Activated CD8-positive, alpha-beta T cell treated with anti-CD3 and anti-CD28 coated beads, Interleukin-2, amount 10 ng/mL, durations not matched to agents 7 days and 5 days (primary cell): ENCODE measurements at regions of chr12 and their contacts with region 1.

Region 1: GRCh38 chr12:21438643-21439042 is 1.2 kb downstream of the PYROXD1 start:
- DNase-seq: no peak
- ATAC-seq: no peak
- H3K4me3 Mint-ChIP-seq: peak overlapping the region; percentile 92
- H3K27ac Mint-ChIP-seq: peak overlapping the region; percentile 94
- H3K4me1 Mint-ChIP-seq: peaks cover 33% of the 10 kb centered on the region
- H3K27me3 Mint-ChIP-seq: peaks cover 15% of the 10 kb centered on the region

Region 2: DNA sequence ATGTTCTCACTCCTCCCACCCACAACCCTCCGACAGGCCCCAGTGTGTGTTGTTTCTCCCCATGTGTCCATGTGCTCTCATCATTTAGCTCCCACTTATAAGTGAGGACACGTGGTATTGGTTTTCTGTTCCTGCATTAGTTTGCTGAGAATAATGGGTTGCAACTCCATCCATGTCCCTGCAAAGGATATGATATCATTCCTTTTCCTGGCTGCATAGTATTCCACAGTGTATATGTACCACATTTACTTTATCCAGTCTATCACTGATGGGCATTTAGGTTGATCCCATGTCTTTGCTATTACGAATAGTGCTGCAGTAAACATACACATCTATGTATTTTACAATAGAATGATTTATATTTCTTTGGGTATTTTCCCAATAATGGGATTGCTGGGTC is 181.5 kb before region 1 on chr12:
- CTCF ChIA-PET with region 1: no interaction called
- POLR2A ChIA-PET with region 1: no interaction called
- DNase-seq: no peak
- ATAC-seq: no peak
- H3K4me3 Mint-ChIP-seq: no peak overlapping the region
- H3K27ac Mint-ChIP-seq: no peak overlapping the region
- H3K4me1 Mint-ChIP-seq: no peaks in the 10 kb centered on the region
- H3K27me3 Mint-ChIP-seq: no peaks in the 10 kb centered on the region

Region 3: DNA sequence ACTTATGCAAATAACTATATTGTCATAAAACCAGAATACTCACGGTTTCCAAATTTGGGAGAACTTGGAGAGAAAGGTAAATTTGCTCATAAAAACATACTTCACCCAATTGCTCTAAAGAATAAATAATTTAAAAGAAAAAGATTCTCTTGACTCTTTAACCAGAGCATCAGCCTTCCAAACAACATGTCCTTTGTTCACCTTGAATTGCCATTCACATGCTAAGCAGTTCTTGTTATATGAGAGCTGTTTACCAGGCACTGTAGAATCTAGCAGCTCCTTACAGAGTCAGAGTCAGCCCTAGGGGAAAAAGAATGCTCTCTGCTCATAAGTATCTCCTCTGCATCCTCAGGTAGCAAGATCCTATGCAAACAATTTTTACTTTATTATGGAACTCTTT is 114.1 kb before region 1 on chr12:
- CTCF ChIA-PET with region 1: no interaction called
- POLR2A ChIA-PET with region 1: no interaction called
- DNase-seq: no peak
- ATAC-seq: no peak
- H3K4me3 Mint-ChIP-seq: no peak overlapping the region
- H3K27ac Mint-ChIP-seq: no peak overlapping the region
- H3K4me1 Mint-ChIP-seq: no peaks in the 10 kb centered on the region
- H3K27me3 Mint-ChIP-seq: no peaks in the 10 kb centered on the region

Region 4: DNA sequence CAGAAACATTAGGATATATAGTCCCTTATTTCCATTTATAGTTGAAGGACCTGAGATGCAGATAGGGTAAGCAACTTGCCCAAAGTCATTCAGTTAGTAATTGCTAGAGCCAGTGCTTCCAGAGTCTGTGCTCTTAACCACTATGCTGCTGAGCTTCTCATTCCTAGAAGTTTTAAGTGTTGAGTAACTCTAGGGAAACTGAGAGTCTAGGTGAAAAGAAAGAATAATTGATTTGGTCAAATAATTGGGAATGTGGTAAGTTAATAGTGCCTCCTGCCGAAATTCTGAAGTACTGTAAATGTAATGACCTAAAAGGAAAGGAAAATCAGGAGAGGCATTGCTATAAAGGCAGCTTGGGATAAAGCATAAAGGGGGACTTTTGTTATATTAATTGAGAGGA is 12.9 kb after region 1 on chr12:
- CTCF ChIA-PET with region 1: interaction called, 5 read pairs
- POLR2A ChIA-PET with region 1: interaction called, 11 read pairs
- DNase-seq: no peak
- ATAC-seq: no peak
- H3K4me3 Mint-ChIP-seq: no peak overlapping the region
- H3K27ac Mint-ChIP-seq: no peak overlapping the region
- H3K4me1 Mint-ChIP-seq: peaks cover 32% of the 10 kb centered on the region
- H3K27me3 Mint-ChIP-seq: no peaks in the 10 kb centered on the region

Region 5: DNA sequence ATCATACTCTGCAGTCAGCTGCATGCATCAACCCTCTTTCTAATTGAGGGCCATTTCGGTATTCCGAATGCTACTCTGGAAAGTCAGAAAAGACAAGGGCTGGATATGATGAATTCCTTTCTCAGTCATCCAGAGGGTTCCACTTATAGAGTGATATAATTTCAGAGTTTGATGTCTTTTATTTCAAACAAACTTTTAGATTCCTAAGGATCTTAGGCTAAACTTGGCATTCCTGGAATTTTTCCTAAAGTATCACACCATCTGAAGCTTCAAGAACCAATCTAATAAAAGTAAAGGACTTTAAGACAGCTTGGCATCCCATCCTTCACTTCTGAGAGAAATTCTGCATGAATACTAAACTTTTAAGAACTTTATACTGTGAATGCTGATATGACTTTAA is 405.2 kb after region 1 on chr12:
- CTCF ChIA-PET with region 1: no interaction called
- POLR2A ChIA-PET with region 1: no interaction called
- DNase-seq: no peak
- ATAC-seq: no peak
- H3K4me3 Mint-ChIP-seq: no peak overlapping the region
- H3K27ac Mint-ChIP-seq: no peak overlapping the region
- H3K4me1 Mint-ChIP-seq: no peaks in the 10 kb centered on the region
- H3K27me3 Mint-ChIP-seq: no peaks in the 10 kb centered on the region